Heart left ventricle (tissue), 16 donors: ENCODE measurements at regions of chr1 and their contacts with region 1.

Region 1: GRCh38 chr1:48677306-48678287 is 99.1 kb downstream of the BEND5 start:
- DNase-seq: peak; percentile 37 to 77 (median 62)
- ATAC-seq: peak in 3 of 4 donors; percentile 75 to 79 (median 75)
- H3K4me3 ChIP-seq: no peak overlapping the region
- H3K27ac ChIP-seq: no peak overlapping the region
- H3K4me1 ChIP-seq: no peaks in the 10 kb centered on the region
- H3K27me3 ChIP-seq: peaks cover 0 to 31% (median 3%) of the 10 kb centered on the region in 9 donors
- CTCF ChIP-seq: peak; percentile 45 to 75 (median 63)
- POLR2A ChIP-seq: no peak

Region 2: DNA sequence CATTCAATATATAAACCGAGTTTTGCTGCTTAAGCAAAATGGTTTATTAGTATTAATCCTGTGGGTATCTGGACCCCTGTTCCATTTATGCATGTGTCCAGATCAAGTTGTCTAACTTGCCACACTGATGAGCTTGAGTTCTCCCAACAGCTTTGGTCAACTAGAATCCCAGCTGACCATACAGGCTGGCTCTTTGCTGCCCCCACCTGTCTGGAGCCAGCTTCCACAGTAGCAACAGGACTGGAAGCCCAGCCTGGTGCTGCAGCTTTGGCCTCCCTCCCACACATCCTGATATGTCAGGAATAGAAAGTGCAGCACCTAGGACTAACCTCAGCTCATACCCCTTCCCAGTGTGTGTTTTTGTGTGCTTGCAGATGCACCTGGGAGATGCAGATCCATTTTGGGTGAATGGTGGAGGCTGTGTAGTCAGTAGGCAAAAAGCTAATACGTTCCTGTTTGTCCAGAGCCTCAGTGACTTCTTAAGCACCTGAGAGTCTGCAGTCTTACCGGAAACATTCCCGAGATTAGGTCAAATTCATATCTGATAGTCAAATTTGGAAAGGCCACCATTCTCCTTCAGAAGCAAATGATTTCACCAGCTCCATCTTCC is 140.0 kb after region 1 on chr1:
- intact Hi-C with region 1: loop called in 8 of 10 experiments (anchors 2 to 10 kb)
- DNase-seq: peak; percentile 32 to 66 (median 54)
- ATAC-seq: peak in 3 of 4 donors; percentile 79 to 82 (median 80)
- H3K4me3 ChIP-seq: no peak overlapping the region
- H3K27ac ChIP-seq: no peak overlapping the region
- H3K4me1 ChIP-seq: no peaks in the 10 kb centered on the region
- H3K27me3 ChIP-seq: no peaks in the 10 kb centered on the region
- CTCF ChIP-seq: peak; percentile 45 to 75 (median 68)
- POLR2A ChIP-seq: no peak

Region 3: DNA sequence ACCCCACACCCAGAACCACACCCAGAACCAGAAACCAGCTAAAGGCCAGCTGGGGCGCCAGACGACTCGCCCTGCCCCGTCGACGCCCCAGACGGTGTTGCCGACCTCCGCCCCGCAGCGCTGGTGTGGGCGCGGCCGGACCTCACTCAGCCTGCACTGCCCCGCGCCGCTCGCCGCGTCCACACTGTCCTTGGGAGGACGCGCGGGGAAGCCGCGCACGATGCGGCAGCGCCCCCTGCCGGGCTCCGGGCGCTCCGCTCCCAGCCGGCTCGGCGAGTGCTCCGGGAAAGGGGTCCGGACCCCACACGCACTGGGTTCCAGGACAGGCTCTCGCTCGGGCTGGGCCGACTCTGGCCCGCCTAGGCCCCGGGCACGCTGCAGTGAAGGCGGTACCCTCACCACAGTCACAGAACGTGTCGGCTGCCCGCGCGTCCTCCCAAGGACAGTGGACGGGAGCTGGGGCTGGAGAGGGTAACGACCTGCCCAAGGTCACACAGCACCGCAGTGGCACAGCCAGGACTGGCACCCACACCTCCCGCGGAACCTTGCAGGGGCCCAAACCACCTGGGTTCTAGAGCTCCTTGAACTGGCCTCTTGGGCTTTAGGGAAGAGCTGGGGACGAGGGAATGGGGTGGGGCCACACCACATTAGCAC is 1655.5 kb after region 1 on chr1:
- intact Hi-C with region 1: loop called in 1 of 10 experiments (anchors 10 kb)
- DNase-seq: peak; percentile 25 to 86 (median 59)
- ATAC-seq: peak; percentile 75 to 98 (median 92)
- H3K4me3 ChIP-seq: peak overlapping the region; percentile 26 to 58 (median 50)
- H3K27ac ChIP-seq: peak overlapping the region in 2 of 12 donors; percentile 33 to 34
- H3K4me1 ChIP-seq: peaks cover 0 to 15% (median 9%) of the 10 kb centered on the region in 12 donors
- H3K27me3 ChIP-seq: peaks cover 0 to 51% (median 9%) of the 10 kb centered on the region in 9 donors
- CTCF ChIP-seq: peak; percentile 72 to 89 (median 78)
- POLR2A ChIP-seq: no peak

Region 4: GRCh38 chr1:50348449-50349241 is 1671.0 kb after region 1 on chr1:
- intact Hi-C with region 1: loop called in 5 of 10 experiments (anchors 2 to 10 kb)
- DNase-seq: peak in 4 of 5 donors; percentile 36 to 38 (median 36)
- ATAC-seq: peak in 3 of 4 donors; percentile 56 to 72 (median 68)
- H3K4me3 ChIP-seq: no peak overlapping the region
- H3K27ac ChIP-seq: no peak overlapping the region
- H3K4me1 ChIP-seq: no peaks in the 10 kb centered on the region
- H3K27me3 ChIP-seq: peaks cover 0 to 39% (median 9%) of the 10 kb centered on the region in 9 donors
- CTCF ChIP-seq: peak; percentile 77 to 91 (median 84)
- POLR2A ChIP-seq: no peak